H1 (cell line): ENCODE measurements at regions of chr18 and their contacts with region 1.

Region 1: GRCh38 chr18:9951022-9951859 is 37.4 kb downstream of the VAPA start:
- DNase-seq: no peak
- H3K4me3 ChIP-seq: no peak overlapping the region
- H3K27ac ChIP-seq: 0 out of 2 replicates have a peak overlapping the region, but pooled peaks have one; percentile 19
- H3K4me1 ChIP-seq: peaks cover 0 to 2% (median 0%) of the 10 kb centered on the region in 4 experiments; a peak in 1 of 7 replicates
- H3K27me3 ChIP-seq: no peaks in the 10 kb centered on the region
- CTCF ChIP-seq: peak in 2 of 3 experiments; percentile 70 to 90; a peak in 3 of 4 replicates
- EP300 ChIP-seq: no peak
- POLR2A ChIP-seq: no peak
- RAD21 ChIP-seq: peak; percentile 75 to 81

Region 2: GRCh38 chr18:9846162-9846925 is 104.9 kb before region 1 on chr18:
- CTCF ChIA-PET with region 1: interaction called, 12 read pairs
- POLR2A ChIA-PET with region 1: no interaction called
- DNase-seq: no peak
- H3K4me3 ChIP-seq: no peak overlapping the region
- H3K27ac ChIP-seq: no peak overlapping the region
- H3K4me1 ChIP-seq: no peaks in the 10 kb centered on the region; a peak in 1 of 7 replicates
- H3K27me3 ChIP-seq: no peaks in the 10 kb centered on the region
- CTCF ChIP-seq: no peak
- EP300 ChIP-seq: no peak
- POLR2A ChIP-seq: no peak
- RAD21 ChIP-seq: no peak